ENCODE measurements at regions of chr4 and their contacts with region 1.

Region 1: GRCh38 chr4:26583865-26584652 is at the start of gene TBC1D19:
- DNase-seq: peak; percentile 89 to 90
- H3K4me3 ChIP-seq: peak within 1 kb of the TSS; percentile 61
- H3K4me3 Mint-ChIP-seq: peak within 1 kb of the TSS; percentile 75
- H3K27ac Mint-ChIP-seq: peak within 1 kb of the TSS; percentile 73
- H3K4me1 ChIP-seq: no peaks in the 10 kb centered on the region
- H3K4me1 Mint-ChIP-seq: peaks cover 7% of the 10 kb centered on the region
- H3K27me3 ChIP-seq: no peaks in the 10 kb centered on the region
- H3K27me3 Mint-ChIP-seq: no peaks in the 10 kb centered on the region
- CTCF ChIP-seq: no peak
- total RNA-seq, gene TBC1D19: 13.8 and 19.1 TPM in 2 replicates

Region 2: DNA sequence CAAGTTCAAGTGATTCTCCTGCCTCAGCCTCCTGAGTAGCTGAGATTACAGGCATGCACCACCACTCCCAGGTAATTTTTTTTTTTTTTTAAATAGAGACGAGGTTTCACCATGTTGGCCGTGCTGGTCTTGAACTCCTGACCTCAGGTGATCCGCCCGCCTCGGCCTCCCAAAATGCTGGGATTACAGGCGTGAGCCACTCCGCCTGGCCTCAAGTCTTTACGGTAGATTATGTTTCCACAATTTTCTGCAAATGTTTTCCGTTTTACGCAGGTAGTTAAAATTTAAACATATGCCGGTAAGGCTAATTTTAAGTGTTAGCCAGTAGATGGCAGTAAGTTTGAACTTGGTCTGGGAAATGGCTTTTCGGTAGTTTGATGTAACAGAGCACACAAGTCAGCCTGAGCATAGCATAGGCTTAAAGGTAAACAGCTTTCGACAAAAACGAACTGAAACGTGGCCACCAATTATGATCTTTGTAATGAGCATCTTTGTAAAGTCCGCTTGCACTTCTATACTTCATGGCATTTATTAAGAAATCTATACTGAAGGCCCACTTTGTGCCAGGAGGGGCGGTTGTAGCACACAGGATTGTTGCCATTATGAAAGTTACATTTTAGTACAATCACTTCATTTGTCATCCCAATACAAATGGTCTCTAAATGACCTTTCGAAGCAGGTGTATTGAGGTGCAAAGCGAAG is 124.9 kb before region 1 on chr4:
- CTCF ChIA-PET with region 1: no interaction called
- POLR2A ChIA-PET with region 1: no interaction called
- intact Hi-C with region 1: loop called (anchors 5 kb)
- DNase-seq: peak in 1 of 2 experiments; percentile 36
- H3K4me3 ChIP-seq: no peak overlapping the region
- H3K4me3 Mint-ChIP-seq: peak overlapping the region; percentile 46
- H3K27ac Mint-ChIP-seq: no peak overlapping the region
- H3K4me1 ChIP-seq: no peaks in the 10 kb centered on the region
- H3K4me1 Mint-ChIP-seq: no peaks in the 10 kb centered on the region
- H3K27me3 ChIP-seq: no peaks in the 10 kb centered on the region
- H3K27me3 Mint-ChIP-seq: no peaks in the 10 kb centered on the region
- CTCF ChIP-seq: peak; percentile 42 to 51